Head of caudate nucleus (tissue), 42 donors: ENCODE measurements at regions of chr9 and their contacts with region 1.

Region 1: GRCh38 chr9:115013998-115014397 is 83.6 kb upstream of the TNFSF8 start:
- DNase-seq: peak; percentile 52 to 86 (median 76)

Region 2: GRCh38 chr9:114662081-114662989 is 351.7 kb before region 1 on chr9:
- intact Hi-C with region 1: loop called (anchors 5 kb)
- DNase-seq: peak in 41 of 42 donors; percentile 27 to 88 (median 71)

Region 3: DNA sequence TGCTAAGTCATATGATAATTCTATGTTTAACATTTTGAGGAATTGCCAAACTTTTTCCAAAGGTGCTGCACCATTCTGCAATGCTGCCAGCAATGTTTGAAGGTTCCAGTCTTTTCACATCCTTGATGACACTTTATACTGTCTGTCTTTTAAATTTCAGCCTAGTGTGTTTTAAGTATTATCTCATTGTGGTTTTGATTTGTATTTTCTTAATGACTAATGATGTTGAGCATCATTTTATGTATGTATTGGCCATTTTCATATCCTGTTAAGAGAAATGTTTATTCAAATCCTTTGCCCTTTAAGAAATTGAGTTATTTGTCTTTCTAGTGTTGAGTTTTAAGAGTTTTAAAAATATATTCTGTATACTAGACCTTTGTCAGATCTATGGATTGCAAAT is 327.0 kb before region 1 on chr9:
- intact Hi-C with region 1: loop called (anchors 5 kb)
- DNase-seq: no peak

Region 4: GRCh38 chr9:114883709-114884108 is 130.3 kb before region 1 on chr9:
- intact Hi-C with region 1: no loop called
- DNase-seq: no peak

Region 5: GRCh38 chr9:114988962-114989599 is 24.9 kb before region 1 on chr9:
- intact Hi-C with region 1: no loop called
- DNase-seq: no peak

Region 6: DNA sequence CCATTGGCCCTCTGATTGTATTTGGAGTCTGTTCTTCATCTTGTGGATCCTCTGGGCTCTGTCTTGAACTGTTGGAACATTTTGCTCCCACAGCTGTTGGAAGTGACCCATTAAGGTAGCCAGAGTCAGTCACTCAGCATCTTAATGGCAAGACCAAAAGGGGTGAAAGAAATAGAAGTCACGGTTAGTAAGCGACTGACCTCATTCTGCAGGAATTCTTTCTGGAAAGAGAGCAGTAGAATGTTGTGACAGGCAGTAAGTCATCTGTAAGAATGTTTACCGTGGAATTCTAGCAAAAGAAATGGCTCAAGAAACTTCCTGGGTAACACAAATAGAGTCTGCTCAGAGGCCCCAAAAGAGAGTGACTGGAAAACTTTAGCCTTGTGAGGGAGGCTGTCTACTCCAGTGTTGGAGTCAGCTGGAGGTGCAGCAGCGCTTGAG is 132.6 kb after region 1 on chr9:
- intact Hi-C with region 1: no loop called
- DNase-seq: no peak

Region 7: DNA sequence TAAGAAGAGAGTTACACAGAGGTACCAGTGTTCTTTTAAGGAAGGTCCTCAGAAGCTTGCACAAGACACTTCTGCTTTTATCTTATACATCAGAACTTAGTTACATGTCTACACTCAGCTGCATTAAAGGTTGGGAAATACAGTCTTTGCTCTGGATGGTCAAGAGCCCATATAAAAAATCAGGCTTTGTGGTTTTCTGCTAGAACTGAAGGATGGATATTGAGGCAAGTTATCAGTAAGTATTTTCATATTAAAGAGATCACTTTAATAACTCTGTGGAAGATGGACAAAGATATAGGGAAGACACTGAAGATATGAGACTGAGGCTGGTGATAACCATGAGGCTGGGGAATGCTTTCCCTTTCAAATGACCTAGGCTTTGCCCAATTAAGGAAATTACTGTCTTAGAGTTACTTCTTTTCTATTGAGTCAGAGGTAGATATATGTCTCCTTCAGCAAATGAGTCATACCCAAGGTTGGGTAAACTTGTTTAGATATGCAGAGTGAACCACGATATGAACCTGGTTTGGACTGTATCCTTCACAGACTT is 191.0 kb after region 1 on chr9:
- intact Hi-C with region 1: no loop called
- DNase-seq: no peak